T-cell (primary cell): ENCODE measurements at regions of chr9 and their contacts with region 1.

Region 1: DNA sequence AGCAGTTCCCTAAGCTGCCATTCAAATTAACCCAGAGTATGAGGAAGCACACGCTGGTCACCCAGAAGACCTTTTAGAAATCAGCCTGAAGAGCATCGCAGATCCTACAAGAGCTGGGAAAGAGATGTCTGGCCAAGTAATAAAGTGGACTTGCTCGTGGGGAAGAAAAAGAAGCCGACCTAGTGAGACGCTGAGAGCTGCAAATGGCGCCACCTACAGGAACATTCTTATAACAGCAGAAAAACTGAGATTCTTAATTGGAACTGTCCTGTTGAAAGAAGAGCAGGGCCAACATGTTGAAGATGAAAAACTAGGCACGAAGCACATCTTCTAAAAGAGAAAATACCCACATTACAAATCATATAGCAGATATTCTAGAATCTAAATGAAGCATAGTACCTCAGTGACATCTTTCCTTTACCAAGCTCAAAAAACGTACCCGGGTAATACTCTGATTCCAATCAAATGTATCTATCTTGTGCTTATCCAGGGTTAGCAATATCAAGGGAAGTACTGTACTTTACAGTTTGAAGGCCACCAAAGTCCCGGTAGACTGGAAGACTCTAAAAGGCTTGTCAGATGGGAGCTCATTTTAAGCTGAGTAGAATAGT is 3.9 kb upstream of the GNAQ start:
- DNase-seq: peak in 32 of 35 experiments; percentile 8 to 88 (median 39)
- ATAC-seq: no peak
- H3K4me3 ChIP-seq: peak overlapping the region in 1 of 2 donors; percentile 18
- H3K4me3 Mint-ChIP-seq: no peak overlapping the region
- H3K27ac ChIP-seq: no peak overlapping the region
- H3K27ac Mint-ChIP-seq: peak overlapping the region; percentile 57 to 83
- H3K4me1 ChIP-seq: peaks cover 10 to 17% of the 10 kb centered on the region in 2 experiments
- H3K4me1 Mint-ChIP-seq: peaks cover 34 to 37% (median 36%) of the 10 kb centered on the region in 3 donors
- H3K27me3 ChIP-seq: no peaks in the 10 kb centered on the region
- H3K27me3 Mint-ChIP-seq: no peaks in the 10 kb centered on the region

Region 2: DNA sequence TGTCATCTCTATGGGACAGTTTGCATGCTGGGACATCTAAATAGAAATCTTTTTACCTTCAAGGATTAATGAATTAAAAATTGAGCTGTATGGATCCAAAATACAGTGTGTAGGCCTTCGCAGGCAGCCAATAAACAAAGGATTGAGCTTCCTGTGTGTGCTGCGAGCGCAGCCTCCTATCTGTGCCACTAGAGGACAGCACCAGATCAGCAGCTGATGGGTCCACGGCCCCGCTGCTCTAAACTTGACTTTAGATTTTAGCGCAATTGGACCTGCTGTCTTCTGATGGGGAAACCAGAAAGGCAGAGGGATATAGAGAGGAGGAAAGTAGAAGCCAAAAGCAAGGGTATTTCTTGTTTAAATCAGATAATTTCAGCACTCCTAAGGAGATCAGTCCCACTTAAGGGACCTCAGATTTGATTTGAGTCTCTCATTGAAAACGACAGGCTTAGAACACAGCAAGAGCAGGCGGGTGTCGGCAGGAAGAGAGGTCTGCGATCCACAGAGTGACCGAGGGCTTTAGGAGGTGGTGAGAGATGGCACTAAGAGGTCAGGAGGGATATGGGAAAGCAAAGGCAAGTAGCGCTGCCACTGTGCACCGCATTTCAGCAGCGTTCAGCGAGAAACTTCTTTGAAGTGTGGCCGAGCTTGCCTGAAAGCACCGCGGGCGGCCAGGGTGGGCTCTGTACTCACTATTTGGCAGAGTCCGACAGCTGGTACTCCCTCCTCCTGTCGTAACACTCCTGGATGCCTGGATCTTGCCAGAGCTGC is 601.6 kb before region 1 on chr9:
- CTCF ChIA-PET with region 1: interaction called in 1 of 2 experiments, 10 read pairs
- POLR2A ChIA-PET with region 1: no interaction called
- DNase-seq: peak in 32 of 35 experiments; percentile 9 to 64 (median 36)
- ATAC-seq: peak; percentile 80 to 94 (median 86)
- H3K4me3 ChIP-seq: no peak overlapping the region
- H3K4me3 Mint-ChIP-seq: no peak overlapping the region
- H3K27ac ChIP-seq: no peak overlapping the region
- H3K27ac Mint-ChIP-seq: no peak overlapping the region
- H3K4me1 ChIP-seq: no peaks in the 10 kb centered on the region
- H3K4me1 Mint-ChIP-seq: peaks cover 3 to 6% (median 3%) of the 10 kb centered on the region in 3 donors
- H3K27me3 ChIP-seq: peaks cover 0 to 12% of the 10 kb centered on the region in 2 experiments
- H3K27me3 Mint-ChIP-seq: peaks cover 0 to 2% of the 10 kb centered on the region in 2 donors

Region 3: GRCh38 chr9:78053627-78054026 is 18.1 kb after region 1 on chr9:
- CTCF ChIA-PET with region 1: interaction called, 9 to 12 read pairs
- POLR2A ChIA-PET with region 1: no interaction called
- DNase-seq: no peak
- ATAC-seq: peak in 2 of 4 experiments; percentile 26 to 63
- H3K4me3 ChIP-seq: no peak overlapping the region
- H3K4me3 Mint-ChIP-seq: peak overlapping the region in 1 of 3 donors; percentile 63
- H3K27ac ChIP-seq: no peak overlapping the region
- H3K27ac Mint-ChIP-seq: peak overlapping the region; percentile 0 to 16
- H3K4me1 ChIP-seq: peaks cover 11 to 16% of the 10 kb centered on the region in 2 experiments
- H3K4me1 Mint-ChIP-seq: peaks cover 22 to 30% (median 27%) of the 10 kb centered on the region in 3 donors
- H3K27me3 ChIP-seq: no peaks in the 10 kb centered on the region
- H3K27me3 Mint-ChIP-seq: no peaks in the 10 kb centered on the region

Region 4: DNA sequence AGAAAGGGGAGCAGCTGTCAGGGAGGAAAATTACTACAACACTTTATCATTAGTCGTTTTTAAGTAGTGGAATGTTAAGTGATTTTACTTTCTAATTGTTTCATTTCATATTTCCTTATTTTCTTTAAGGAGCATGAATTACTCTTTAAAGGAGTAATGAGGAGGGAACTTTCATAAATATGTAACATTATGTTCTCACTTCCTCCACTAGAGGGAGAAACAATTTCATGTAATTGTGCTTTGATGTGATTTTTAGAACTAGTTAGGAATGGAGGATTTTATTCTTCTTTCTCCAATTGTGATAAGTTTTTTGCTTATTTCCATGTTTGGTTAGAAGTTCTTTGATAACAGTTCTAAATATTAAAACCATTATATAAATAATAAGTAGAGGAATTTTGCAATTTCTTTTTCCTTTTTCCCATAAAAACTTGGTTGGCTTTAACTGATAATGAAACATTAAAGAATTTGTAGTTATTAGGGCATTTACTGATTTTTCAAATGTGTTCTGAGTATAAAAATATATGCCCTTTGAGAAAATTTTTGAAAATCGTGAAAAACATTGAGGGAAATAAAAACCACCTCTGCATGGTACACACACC is 226.0 kb after region 1 on chr9:
- CTCF ChIA-PET with region 1: no interaction called
- POLR2A ChIA-PET with region 1: no interaction called
- DNase-seq: peak in 1 of 35 experiments; percentile 51
- ATAC-seq: no peak
- H3K4me3 ChIP-seq: no peak overlapping the region
- H3K4me3 Mint-ChIP-seq: no peak overlapping the region
- H3K27ac ChIP-seq: no peak overlapping the region
- H3K27ac Mint-ChIP-seq: no peak overlapping the region
- H3K4me1 ChIP-seq: no peaks in the 10 kb centered on the region
- H3K4me1 Mint-ChIP-seq: no peaks in the 10 kb centered on the region
- H3K27me3 ChIP-seq: no peaks in the 10 kb centered on the region
- H3K27me3 Mint-ChIP-seq: no peaks in the 10 kb centered on the region